HCT116 (cell line): ENCODE measurements at regions of chr5 and their contacts with region 1.

Region 1: DNA sequence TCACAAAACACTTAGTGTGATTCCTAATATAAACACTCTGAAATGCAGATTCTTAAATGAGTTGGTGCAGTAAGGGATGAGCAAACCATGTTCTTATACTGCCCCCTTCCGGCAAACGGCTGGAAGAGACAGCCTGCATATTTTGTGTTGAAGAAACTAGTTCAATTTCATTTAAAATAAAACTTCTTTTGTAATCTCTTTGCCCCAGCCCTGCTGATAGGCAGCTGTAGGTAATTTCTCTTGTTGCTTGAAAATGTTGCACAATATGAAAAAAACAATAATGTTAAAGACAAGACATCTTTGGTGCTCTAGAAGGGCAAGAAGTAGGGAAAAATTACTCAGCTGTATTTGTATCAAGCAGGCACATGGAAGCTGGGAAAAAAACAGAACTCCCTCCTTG is 89.7 kb upstream of the CCNG1 start:
- DNase-seq: peak; percentile 51
- ATAC-seq: peak; percentile 82
- H3K4me3 ChIP-seq: no peak overlapping the region
- H3K27ac ChIP-seq: no peak overlapping the region
- H3K4me1 ChIP-seq: no peaks in the 10 kb centered on the region
- H3K27me3 ChIP-seq: 0 out of 2 replicates have a peak, but pooled peaks cover 10% of the 10 kb centered on the region
- CTCF ChIP-seq: peak; percentile 53 to 92 (median 81); a peak in 5 of 6 replicates
- POLR2A ChIP-seq: no peak
- RAD21 ChIP-seq: peak; percentile 82

Region 2: GRCh38 chr5:161851691-161852299 is 1495.9 kb before region 1 on chr5:
- CTCF ChIA-PET with region 1: no interaction called
- POLR2A ChIA-PET with region 1: no interaction called
- RAD21 ChIA-PET with region 1: no interaction called
- intact Hi-C with region 1: loop called (anchors 5 kb)
- DNase-seq: no peak
- ATAC-seq: no peak
- H3K4me3 ChIP-seq: no peak overlapping the region
- H3K27ac ChIP-seq: no peak overlapping the region
- H3K4me1 ChIP-seq: no peaks in the 10 kb centered on the region
- H3K27me3 ChIP-seq: no peaks in the 10 kb centered on the region
- CTCF ChIP-seq: peak in 2 of 3 experiments; percentile 16 to 43; a peak in 3 of 6 replicates
- POLR2A ChIP-seq: no peak
- RAD21 ChIP-seq: peak; percentile 35; the same call in 1 of the 2 replicates

Region 3: GRCh38 chr5:162227075-162227474 is 1120.6 kb before region 1 on chr5:
- CTCF ChIA-PET with region 1: no interaction called
- POLR2A ChIA-PET with region 1: no interaction called
- RAD21 ChIA-PET with region 1: no interaction called
- intact Hi-C with region 1: loop called (anchors 5 kb)
- DNase-seq: no peak
- ATAC-seq: no peak
- H3K4me3 ChIP-seq: no peak overlapping the region
- H3K27ac ChIP-seq: no peak overlapping the region
- H3K4me1 ChIP-seq: no peaks in the 10 kb centered on the region
- H3K27me3 ChIP-seq: no peaks in the 10 kb centered on the region
- CTCF ChIP-seq: peak in 2 of 3 experiments; percentile 6 to 21; a peak in 1 of 6 replicates
- POLR2A ChIP-seq: no peak
- RAD21 ChIP-seq: peak; percentile 30; the same call in 1 of the 2 replicates

Region 4: DNA sequence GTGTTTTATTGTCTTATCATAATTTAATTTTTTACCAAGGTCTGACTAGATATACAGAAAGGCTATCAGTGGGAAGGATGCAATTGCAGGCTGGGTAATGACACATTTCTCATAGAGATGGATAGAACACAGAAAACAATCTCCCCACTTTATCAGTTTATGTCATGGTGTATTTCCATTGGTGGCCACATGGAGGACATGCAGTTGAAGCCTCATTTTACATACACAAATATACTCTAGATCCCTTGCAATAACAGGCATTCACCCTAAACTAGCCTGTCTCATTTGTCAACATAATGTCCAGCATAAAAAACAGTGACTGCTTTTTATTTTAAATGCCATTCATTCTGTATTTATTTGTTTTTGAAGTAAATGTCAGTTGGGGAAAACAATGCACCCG is 753.8 kb before region 1 on chr5:
- CTCF ChIA-PET with region 1: no interaction called
- POLR2A ChIA-PET with region 1: no interaction called
- RAD21 ChIA-PET with region 1: no interaction called
- intact Hi-C with region 1: loop called (anchors 10 kb)
- DNase-seq: no peak
- ATAC-seq: no peak
- H3K4me3 ChIP-seq: no peak overlapping the region
- H3K27ac ChIP-seq: no peak overlapping the region
- H3K4me1 ChIP-seq: no peaks in the 10 kb centered on the region
- H3K27me3 ChIP-seq: no peaks in the 10 kb centered on the region
- CTCF ChIP-seq: peak in 2 of 3 experiments; percentile 31 to 38; a peak in 2 of 6 replicates
- POLR2A ChIP-seq: no peak
- RAD21 ChIP-seq: no peak

Region 5: DNA sequence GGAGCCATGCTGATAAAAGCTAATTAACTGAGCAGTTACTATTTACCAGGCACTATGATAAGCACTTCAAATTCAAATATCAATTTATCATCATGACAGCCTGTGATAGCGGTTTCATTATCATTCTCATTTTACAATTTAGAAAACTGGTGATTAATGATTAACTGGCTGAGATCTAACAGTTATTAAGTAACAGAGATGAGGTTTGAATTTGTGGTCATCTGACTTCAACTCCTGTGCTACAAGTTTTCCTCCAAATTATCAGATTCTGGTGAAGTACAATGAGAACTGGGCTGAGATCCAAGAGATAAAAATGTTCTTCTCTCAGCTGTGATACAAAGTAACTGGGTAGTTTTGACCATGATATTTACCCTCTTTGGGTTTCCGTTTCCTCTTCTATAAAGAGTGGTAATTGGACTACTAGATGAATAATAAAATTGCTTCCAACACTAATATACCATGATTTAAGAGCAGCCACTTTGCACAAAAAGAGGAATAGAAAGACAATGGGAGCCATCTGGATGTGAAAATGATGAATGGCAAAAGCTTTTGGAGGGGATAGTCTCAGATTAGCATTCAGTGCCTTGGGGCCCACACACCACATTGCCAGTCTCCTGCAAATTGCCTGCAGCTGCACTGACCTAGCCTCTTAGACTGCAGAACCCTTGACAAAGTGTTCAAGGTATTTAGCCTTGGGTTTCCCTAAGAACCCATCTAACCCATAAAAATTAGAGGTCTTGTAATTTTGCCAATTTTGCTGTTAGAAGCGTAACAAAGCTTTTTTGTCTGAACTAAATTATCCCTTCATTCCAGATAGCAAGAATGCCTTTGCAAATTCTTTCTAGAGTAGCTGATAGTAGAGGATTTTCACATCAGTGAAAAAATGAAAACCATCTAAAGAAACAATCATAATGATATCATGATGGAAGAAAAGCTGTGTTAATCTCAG is 15.4 kb after region 1 on chr5:
- CTCF ChIA-PET with region 1: no interaction called
- POLR2A ChIA-PET with region 1: no interaction called
- RAD21 ChIA-PET with region 1: no interaction called
- intact Hi-C with region 1: no loop called
- DNase-seq: no peak
- ATAC-seq: no peak
- H3K4me3 ChIP-seq: no peak overlapping the region
- H3K27ac ChIP-seq: no peak overlapping the region
- H3K4me1 ChIP-seq: no peaks in the 10 kb centered on the region
- H3K27me3 ChIP-seq: no peaks in the 10 kb centered on the region
- CTCF ChIP-seq: no peak
- POLR2A ChIP-seq: no peak
- RAD21 ChIP-seq: no peak

Region 6: DNA sequence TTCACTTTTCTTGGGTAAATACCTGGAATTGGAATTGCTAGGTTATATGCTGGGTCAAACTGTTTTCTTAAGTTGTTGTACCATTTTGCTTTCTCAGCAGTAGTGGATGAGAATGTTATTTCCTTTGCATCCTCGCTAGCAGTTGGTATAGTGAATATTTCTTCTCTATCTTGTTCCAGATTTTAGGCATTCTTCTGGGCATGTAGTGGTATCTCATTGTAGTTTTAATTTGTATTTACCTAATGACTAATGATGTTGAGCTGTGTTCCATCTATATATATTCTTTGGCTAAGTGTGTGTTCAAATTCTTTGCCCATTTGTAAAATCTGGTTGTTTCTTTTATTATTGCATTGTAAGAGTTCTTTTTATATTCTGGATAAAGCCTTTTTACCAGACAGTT is 491.1 kb after region 1 on chr5:
- CTCF ChIA-PET with region 1: no interaction called
- POLR2A ChIA-PET with region 1: no interaction called
- RAD21 ChIA-PET with region 1: no interaction called
- intact Hi-C with region 1: no loop called
- DNase-seq: no peak
- ATAC-seq: no peak
- H3K4me3 ChIP-seq: no peak overlapping the region
- H3K27ac ChIP-seq: no peak overlapping the region
- H3K4me1 ChIP-seq: no peaks in the 10 kb centered on the region
- H3K27me3 ChIP-seq: no peaks in the 10 kb centered on the region
- CTCF ChIP-seq: no peak
- POLR2A ChIP-seq: no peak
- RAD21 ChIP-seq: no peak